Caco-2 (cell line): ENCODE measurements at regions of chr2 and their contacts with region 1.

Region 1: DNA sequence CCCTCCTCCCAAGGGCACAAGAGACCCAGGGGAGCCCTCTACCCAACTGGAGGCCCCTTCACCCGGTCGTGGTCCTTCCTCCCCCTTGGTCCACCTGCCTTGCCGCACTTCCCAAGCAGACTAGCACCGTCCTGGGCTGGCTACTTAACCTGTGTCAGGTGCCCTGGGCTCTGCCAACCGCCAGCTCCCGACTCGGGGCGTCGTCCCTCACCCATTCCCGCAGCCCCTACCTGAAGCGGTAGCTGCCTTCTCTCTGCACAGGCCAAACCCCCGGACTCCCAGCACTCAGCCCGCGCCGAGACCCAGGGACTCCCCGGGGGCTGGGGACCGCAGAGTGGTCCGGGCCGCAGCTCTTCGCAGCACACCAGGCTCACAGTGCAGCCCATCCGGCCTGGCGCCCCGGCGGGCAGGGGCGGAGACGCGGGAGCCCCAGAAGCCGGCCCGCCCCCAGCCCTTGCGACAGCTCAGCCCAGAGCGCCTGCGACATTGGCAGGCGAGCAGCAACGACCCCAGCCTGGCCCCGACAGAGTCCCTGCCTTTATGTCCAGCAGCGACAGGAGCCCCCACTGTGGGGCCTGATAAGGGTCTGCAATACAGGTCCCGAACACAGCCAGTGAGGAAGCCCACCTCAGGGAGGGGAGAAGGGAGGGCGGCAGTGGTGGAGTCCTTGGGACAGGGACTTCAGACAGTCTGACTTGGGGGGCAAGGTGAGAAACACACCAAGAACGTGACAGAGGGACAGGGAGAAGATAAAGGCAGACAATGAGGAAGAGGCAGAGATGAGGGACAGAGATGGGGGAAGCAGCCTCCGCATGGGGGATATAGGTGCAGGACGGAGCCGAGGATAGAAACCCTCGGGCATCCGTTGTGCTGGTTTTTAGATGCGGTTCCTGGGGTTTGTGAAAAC is 31.0 kb upstream of the TNS1 start:
- DNase-seq: no peak
- H3K4me3 ChIP-seq: no peak overlapping the region
- H3K4me3 Mint-ChIP-seq: no peak overlapping the region
- H3K27ac Mint-ChIP-seq: no peak overlapping the region
- H3K4me1 ChIP-seq: 0 out of 2 replicates have a peak, but pooled peaks cover 5% of the 10 kb centered on the region
- H3K4me1 Mint-ChIP-seq: no peaks in the 10 kb centered on the region
- H3K27me3 ChIP-seq: no peaks in the 10 kb centered on the region
- H3K27me3 Mint-ChIP-seq: peaks cover 6% of the 10 kb centered on the region
- CTCF ChIP-seq: no peak

Region 2: DNA sequence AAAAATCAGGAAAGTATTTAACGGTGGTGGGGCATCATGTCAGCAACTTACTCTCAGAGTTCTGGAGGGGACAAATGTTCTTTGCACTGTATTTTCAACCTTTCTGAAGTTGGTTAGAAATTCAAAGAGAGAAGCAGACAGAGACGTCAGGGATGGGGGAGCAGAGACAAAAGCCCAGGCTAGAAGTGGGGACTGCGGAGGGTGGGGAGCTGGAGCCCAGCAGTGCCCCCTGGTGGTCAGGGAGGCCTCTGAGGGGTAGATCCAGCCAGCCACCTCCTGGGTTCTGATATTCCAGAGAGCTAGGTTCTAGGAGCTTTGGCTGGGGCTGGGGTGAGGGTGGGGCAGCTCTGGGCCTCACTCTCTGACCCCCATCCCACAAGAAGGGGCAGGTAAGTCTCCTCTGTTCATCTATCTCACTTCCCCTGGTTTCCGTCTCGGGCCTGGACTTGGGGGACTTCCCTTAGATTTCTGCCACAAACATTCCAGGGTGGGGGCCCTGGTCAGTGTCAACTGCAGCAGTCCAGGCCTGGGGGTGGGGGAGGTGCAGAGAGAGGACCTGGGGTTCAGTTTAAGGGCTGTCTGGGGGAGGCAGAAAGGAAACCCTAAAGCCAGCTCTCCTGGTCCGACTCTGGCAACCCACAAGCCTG is 39.9 kb before region 1 on chr2:
- CTCF ChIA-PET with region 1: interaction called, 3 read pairs
- POLR2A ChIA-PET with region 1: no interaction called
- intact Hi-C with region 1: loop called (anchors 2 kb)
- DNase-seq: peak in 1 of 2 experiments; percentile 79
- H3K4me3 ChIP-seq: no peak overlapping the region
- H3K4me3 Mint-ChIP-seq: no peak overlapping the region
- H3K27ac Mint-ChIP-seq: no peak overlapping the region
- H3K4me1 ChIP-seq: peaks cover under 1% of the 10 kb centered on the region; the same call in 1 of the 2 replicates
- H3K4me1 Mint-ChIP-seq: peaks cover 3% of the 10 kb centered on the region
- H3K27me3 ChIP-seq: no peaks in the 10 kb centered on the region
- H3K27me3 Mint-ChIP-seq: no peaks in the 10 kb centered on the region
- CTCF ChIP-seq: peak; percentile 93 to 94

Region 3: GRCh38 chr2:218010140-218010983 is 23.5 kb before region 1 on chr2:
- CTCF ChIA-PET with region 1: interaction called, 4 read pairs
- POLR2A ChIA-PET with region 1: no interaction called
- intact Hi-C with region 1: loop called (anchors 1 kb)
- DNase-seq: peak; percentile 64 to 83
- H3K4me3 ChIP-seq: peak overlapping the region; percentile 80
- H3K4me3 Mint-ChIP-seq: peak overlapping the region; percentile 75
- H3K27ac Mint-ChIP-seq: no peak overlapping the region
- H3K4me1 ChIP-seq: no peaks in the 10 kb centered on the region
- H3K4me1 Mint-ChIP-seq: no peaks in the 10 kb centered on the region
- H3K27me3 ChIP-seq: no peaks in the 10 kb centered on the region; the same call in 1 of the 2 replicates
- H3K27me3 Mint-ChIP-seq: peaks cover 13% of the 10 kb centered on the region
- CTCF ChIP-seq: peak; percentile 58 to 82

Region 4: GRCh38 chr2:218501665-218502064 is 467.8 kb after region 1 on chr2:
- CTCF ChIA-PET with region 1: no interaction called
- POLR2A ChIA-PET with region 1: no interaction called
- intact Hi-C with region 1: no loop called
- DNase-seq: no peak
- H3K4me3 ChIP-seq: no peak overlapping the region
- H3K4me3 Mint-ChIP-seq: no peak overlapping the region
- H3K27ac Mint-ChIP-seq: peak overlapping the region; percentile 10
- H3K4me1 ChIP-seq: 0 out of 2 replicates have a peak, but pooled peaks cover 4% of the 10 kb centered on the region
- H3K4me1 Mint-ChIP-seq: peaks cover 10% of the 10 kb centered on the region
- H3K27me3 ChIP-seq: no peaks in the 10 kb centered on the region
- H3K27me3 Mint-ChIP-seq: no peaks in the 10 kb centered on the region
- CTCF ChIP-seq: no peak